ENCODE measurements at regions of chr9 and their contacts with region 1.

Region 1: DNA sequence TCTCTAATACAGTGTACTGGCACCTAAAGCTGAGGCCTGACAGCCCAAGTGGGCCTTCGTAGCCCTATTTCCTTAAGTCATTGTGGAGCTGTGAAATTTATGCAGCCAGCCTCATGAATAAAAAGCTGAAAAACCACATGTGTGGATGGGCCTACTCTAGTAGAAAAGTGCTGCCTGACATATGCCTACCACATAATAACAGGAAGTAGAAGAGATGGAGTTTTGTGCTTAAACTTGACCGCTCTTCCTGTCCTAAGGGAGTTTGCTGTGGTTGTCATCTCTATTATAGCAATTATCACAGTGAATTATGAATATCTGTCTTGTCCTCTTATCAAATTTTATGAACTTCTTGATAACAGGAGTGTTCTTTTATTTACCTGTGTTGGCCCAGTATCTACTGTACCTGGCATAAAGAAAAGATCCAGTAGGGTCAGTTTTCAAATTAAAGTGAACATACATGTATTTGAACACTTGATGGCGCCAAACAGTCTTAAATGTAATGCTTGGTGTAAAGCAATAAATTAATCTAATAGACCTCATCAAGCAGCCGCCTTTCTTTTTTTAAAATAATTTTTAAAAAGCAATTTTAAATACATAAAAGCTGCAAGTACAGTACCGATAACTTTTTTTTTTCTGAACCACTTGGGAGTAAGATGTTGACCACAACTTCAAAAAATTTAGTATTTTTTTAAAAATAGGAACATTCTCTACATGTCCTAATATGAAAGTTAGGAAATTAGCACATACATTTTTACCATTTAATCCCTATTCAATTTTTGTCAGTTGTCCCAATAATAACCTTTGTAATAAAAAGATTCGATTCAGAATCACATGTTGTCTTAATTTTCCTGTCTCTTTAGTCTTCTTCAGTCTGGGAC is 51.0 kb downstream of the FKTN start:
- DNase-seq: no peak

Region 2: DNA sequence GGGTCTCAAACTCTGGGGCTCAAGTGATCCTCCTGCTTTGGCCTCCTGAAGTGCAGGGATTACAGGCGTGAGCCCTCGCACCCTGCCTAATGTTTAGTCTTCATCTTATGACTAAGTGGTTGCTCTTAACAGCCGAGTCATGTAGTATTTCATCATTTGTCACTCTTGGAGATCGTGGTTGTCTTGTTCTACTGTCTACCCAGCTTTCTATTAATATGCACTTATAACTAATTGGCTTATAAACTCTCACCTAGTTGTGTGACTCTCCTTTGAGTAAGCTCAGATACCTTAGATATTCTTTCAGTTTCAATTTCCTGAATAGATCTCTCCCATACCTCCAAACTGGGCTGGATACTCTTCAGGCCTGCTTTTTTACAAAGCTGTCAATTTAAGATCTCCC is 344.6 kb before region 1 on chr9:
- intact Hi-C with region 1: no loop called
- DNase-seq: no peak

Region 3: DNA sequence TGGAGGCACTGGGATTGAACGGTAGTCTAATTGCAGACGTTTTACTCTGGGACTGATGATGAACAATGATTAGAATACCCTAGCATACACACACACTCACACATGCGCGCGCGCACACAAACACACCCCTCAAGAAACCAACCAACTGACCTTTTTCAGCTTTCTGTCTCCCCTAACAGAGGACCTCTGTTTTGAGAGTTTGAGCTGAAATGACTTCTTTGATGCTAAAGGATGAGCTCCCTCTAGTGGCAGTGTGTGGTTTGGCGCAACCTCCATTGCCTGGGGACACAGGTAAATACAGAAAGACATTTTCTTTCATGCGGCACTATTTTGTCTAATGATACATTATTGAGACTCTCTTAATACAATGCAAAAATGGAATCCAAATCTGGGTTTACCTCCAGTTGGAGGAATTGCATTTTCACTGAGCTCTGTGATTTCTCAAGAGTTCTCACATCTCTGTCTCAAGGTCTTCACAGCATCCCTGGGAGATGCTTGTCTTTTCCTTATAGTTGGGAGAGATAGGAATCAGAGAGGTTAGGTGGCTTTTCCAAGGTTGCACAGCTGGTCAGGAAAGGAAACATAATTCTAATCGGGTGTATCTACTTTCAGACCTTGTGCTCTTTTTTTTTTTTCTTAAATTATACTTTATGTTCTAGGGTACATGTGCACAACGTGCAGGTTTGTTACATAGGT is 272.8 kb after region 1 on chr9:
- intact Hi-C with region 1: loop called (anchors 10 kb)
- DNase-seq: no peak